Mammary epithelial cell (primary cell): ENCODE measurements at regions of chr1 and their contacts with region 1.

Region 1: DNA sequence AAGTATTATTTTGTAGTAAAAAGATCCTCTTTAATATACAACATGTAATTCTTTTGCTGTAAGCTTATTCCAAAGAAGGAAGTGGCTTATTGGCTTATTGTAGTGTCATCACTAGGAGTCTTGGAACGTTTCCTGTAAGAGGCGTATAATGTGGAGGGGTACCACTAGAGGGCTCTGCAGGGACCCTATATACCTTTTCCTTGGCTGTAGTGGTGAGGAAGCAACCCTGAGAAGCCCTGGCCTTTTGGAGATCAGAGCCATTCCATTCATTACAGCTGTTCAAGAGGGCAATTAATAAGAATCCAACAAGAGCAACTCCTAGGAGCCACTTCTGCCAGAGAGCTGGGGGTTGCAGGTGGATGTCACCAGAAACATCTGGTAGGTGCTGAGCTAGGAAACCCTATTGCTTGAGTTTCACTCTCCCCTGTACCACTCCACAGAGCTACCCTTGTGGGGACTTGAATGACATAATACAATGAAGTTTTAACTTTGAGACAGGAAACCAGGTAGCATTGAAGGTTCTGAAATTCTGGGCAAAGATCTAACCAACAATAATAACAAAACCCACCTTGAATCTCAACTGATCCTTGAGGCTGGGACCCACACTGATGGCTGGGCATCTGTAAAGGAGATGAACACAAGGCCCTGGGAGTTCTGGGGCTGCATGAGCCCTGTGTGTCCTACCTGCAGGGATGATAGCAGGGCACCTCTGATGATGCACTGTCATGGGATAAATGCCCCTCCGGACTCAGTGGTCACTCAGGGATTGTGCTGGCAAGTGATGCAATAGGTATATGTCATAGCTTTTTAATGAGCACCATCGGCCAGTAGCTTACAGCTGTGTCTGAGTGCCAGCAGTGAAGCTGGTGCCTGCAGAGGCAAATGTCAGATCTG is 160.2 kb upstream of the COA6 start:
- DNase-seq: peak; percentile 53
- H3K4me3 ChIP-seq: no peak overlapping the region
- H3K27ac ChIP-seq: no peak overlapping the region
- H3K4me1 ChIP-seq: peaks cover 48% of the 10 kb centered on the region
- H3K27me3 ChIP-seq: no peaks in the 10 kb centered on the region
- CTCF ChIP-seq: peak; percentile 72 to 81

Region 2: DNA sequence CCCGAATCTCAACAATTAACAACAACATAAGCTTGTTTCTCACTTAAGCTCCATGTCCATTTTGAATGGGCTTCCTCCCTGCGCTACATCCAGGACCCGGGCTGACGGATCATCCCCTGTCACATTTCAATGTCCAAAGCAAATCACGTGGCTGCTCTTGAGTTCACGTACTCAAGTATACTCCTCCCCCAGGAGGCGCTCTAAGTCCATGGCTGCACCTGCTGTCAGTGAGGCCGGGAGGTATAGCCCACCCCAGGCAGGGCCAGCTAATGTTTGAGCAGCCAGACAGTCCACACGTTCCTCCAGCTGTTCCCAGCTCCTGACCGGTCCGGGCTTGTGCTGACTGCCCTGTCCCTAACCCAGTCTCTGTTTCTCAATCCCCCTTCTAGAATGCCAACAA is 87.7 kb before region 1 on chr1:
- CTCF ChIA-PET with region 1: no interaction called
- dilution Hi-C with region 1: no loop called
- in situ Hi-C with region 1: no loop called
- intact Hi-C with region 1: loop called (anchors 5 kb)
- DNase-seq: peak; percentile 55
- H3K4me3 ChIP-seq: no peak overlapping the region
- H3K27ac ChIP-seq: no peak overlapping the region
- H3K4me1 ChIP-seq: peaks cover 7% of the 10 kb centered on the region
- H3K27me3 ChIP-seq: no peaks in the 10 kb centered on the region
- CTCF ChIP-seq: peak; percentile 66 to 79

Region 3: DNA sequence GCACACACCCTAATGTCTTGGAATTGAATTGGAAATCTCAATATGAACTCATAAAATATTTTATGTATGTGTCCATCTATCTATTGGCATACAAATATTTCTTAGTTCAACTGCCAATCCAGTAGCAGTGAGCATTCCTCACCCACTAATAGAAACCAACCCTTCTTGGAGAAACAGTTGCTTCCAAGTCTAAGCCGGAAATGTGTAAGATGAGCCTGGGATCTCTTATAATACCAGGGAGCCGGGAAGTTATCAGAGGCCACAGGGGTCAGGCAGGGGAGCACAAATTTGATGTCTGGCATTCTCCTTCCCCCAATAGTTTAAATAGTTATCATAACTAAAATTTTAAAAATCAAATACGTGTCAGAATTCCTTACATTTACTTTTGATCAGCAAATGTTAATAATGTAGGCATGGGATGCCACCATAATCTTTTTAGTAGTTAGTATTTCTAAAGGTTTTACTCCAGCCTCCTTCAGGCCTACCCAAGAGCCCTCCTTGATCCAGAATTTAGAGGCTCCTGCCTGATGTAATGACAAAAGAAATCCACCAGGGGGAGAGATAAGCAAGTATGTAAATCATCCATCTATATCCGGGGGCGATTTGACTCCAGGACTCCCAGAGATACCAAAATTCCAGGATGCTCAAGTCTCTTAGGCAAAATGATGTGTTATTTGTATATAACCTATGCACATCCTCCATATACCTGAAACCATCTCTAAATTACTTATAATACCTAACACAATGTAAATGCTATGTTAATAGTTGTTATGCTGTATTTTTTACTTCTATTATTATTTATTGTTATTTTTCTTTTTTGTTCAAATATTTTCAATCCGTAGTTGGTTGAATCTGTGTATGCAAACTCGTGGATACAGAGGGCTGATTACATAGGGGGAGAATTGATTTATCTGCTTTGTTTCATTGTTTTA is 58.4 kb before region 1 on chr1:
- CTCF ChIA-PET with region 1: no interaction called
- dilution Hi-C with region 1: no loop called
- in situ Hi-C with region 1: no loop called
- intact Hi-C with region 1: loop called (anchors 2 kb)
- DNase-seq: peak; percentile 73
- H3K4me3 ChIP-seq: no peak overlapping the region
- H3K27ac ChIP-seq: no peak overlapping the region
- H3K4me1 ChIP-seq: peaks cover 3% of the 10 kb centered on the region
- H3K27me3 ChIP-seq: no peaks in the 10 kb centered on the region
- CTCF ChIP-seq: peak; percentile 73 to 80

Region 4: GRCh38 chr1:234170622-234171021 is 42.4 kb before region 1 on chr1:
- CTCF ChIA-PET with region 1: no interaction called
- dilution Hi-C with region 1: no loop called
- in situ Hi-C with region 1: no loop called
- intact Hi-C with region 1: no loop called
- DNase-seq: no peak
- H3K4me3 ChIP-seq: no peak overlapping the region
- H3K27ac ChIP-seq: no peak overlapping the region
- H3K4me1 ChIP-seq: no peaks in the 10 kb centered on the region
- H3K27me3 ChIP-seq: no peaks in the 10 kb centered on the region
- CTCF ChIP-seq: no peak

Region 5: GRCh38 chr1:234188454-234188792 is 24.6 kb before region 1 on chr1:
- CTCF ChIA-PET with region 1: interaction called, 3 read pairs
- dilution Hi-C with region 1: no loop called
- in situ Hi-C with region 1: no loop called
- intact Hi-C with region 1: loop called (anchors 2 kb)
- DNase-seq: peak; percentile 98
- H3K4me3 ChIP-seq: no peak overlapping the region
- H3K27ac ChIP-seq: peak overlapping the region; percentile 75
- H3K4me1 ChIP-seq: peaks cover 38% of the 10 kb centered on the region
- H3K27me3 ChIP-seq: no peaks in the 10 kb centered on the region
- CTCF ChIP-seq: peak; percentile 35 to 48

Region 6: GRCh38 chr1:234260578-234260977 is 47.6 kb after region 1 on chr1:
- CTCF ChIA-PET with region 1: no interaction called
- dilution Hi-C with region 1: no loop called
- in situ Hi-C with region 1: no loop called
- intact Hi-C with region 1: no loop called
- DNase-seq: peak; percentile 75
- H3K4me3 ChIP-seq: no peak overlapping the region
- H3K27ac ChIP-seq: peak overlapping the region; percentile 16
- H3K4me1 ChIP-seq: peaks cover 37% of the 10 kb centered on the region
- H3K27me3 ChIP-seq: no peaks in the 10 kb centered on the region
- CTCF ChIP-seq: no peak

Region 7: DNA sequence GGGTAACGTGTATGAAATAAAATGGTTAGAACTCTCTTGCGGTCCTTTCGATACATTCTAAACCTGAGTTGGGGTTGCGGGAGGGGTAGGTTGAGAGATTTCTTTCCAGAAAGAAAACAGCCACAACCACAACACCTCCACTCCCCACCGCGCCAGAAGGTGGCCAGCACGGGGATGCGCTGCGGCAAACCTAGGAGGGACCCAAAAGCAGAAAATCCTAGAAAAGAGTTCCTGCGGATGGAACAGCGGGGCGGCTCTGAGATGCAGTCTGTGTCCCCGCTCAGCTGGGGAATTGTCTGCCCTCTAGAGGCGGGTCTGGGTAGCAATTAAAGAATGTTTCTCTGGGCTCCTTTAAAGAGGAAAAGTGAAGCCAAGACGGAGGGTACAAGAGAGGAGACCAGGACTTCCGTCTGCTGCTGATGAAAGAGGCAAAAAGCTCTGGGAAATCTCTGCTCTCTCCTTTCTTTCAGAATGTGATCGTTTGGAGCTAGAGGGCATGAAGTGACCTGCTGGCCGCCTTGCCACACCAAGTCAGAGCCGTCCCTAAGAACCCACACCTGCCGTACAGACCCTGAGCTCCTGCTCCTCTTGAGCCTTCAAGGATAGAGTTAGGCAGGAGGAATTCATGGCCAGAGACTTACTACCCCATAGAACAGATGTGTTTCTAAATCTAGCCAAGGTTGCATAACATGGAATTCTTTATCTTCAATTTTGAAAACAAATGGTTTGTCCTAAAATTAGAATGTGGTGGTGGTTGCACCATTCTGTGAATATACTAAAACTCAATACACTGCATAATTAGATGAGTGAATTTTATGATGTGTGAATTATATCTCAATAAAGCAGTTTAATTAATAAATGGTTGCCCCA is 113.7 kb after region 1 on chr1:
- CTCF ChIA-PET with region 1: no interaction called
- dilution Hi-C with region 1: no loop called
- in situ Hi-C with region 1: no loop called
- intact Hi-C with region 1: loop called (anchors 1 kb)
- DNase-seq: peak; percentile 41
- H3K4me3 ChIP-seq: no peak overlapping the region
- H3K27ac ChIP-seq: no peak overlapping the region
- H3K4me1 ChIP-seq: no peaks in the 10 kb centered on the region
- H3K27me3 ChIP-seq: no peaks in the 10 kb centered on the region
- CTCF ChIP-seq: peak; percentile 81

Region 8: DNA sequence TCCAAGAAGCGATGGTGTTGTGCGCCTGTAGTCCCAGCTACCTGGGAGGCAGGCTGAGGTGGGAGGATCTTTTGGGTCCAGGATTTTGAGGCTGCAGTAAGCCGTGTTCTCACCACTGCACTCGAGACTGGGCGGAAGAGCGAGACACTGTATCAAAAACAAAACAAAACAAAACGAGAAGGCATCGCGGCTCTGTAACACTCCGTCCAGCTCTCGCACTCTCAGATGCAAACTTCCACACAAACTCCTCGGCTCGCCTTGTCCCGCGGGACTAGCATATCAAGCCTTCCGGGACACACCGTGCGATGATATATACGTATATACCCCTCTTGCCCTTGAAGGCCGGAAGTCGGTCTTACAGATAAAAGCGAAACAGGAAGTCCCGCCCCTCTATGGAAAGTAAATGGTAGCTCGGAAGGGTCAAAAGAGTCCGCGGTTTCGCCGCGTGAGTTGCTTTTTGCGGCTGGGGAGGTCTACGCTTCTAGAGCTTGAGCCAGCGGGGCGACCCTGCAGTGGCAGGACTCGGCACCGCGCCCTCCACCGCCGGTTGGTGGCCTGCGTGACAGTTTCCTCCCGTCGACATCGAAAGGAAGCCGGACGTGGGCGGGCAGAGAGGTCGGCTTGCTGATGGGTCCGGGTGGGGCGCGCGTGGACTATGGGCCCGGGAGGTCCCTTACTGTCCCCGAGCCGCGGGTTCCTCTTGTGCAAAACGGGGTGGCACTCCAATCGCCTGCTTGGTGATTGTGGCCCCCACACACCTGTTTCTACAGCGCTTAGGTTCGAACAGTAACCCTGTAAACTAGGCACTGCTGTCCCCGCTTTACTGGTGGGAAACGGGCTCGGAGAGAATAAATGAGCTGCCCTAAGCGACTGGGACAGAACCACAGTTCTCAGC is 160.3 kb after region 1 on chr1 and contains the start of gene COA6:
- CTCF ChIA-PET with region 1: no interaction called
- dilution Hi-C with region 1: no loop called
- in situ Hi-C with region 1: no loop called
- intact Hi-C with region 1: loop called (anchors 2 kb)
- DNase-seq: peak; percentile 96
- H3K4me3 ChIP-seq: peak within 1 kb of the TSS; percentile 74 to 93 (median 91)
- H3K27ac ChIP-seq: peak within 1 kb of the TSS; percentile 88
- H3K4me1 ChIP-seq: peaks cover 14% of the 10 kb centered on the region
- H3K27me3 ChIP-seq: no peaks in the 10 kb centered on the region
- CTCF ChIP-seq: no peak
- total RNA-seq, gene COA6: 10.3 to 43.4 TPM